ENCODE measurements at regions of chr17 and their contacts with region 1.

Region 1: GRCh38 chr17:42517516-42517915 is 18.5 kb upstream of the NAGLU start:
- DNase-seq: peak; percentile 73 to 85 (median 82)
- ATAC-seq: peak; percentile 64
- H3K4me3 ChIP-seq: no peak overlapping the region
- H3K27ac ChIP-seq: peak overlapping the region; percentile 41 to 80 (median 70)
- H3K4me1 ChIP-seq: peaks cover 40% of the 10 kb centered on the region
- H3K27me3 ChIP-seq: no peaks in the 10 kb centered on the region
- CTCF ChIP-seq: peak; percentile 76 to 89 (median 87)
- POLR2A ChIP-seq: no peak

Region 2: DNA sequence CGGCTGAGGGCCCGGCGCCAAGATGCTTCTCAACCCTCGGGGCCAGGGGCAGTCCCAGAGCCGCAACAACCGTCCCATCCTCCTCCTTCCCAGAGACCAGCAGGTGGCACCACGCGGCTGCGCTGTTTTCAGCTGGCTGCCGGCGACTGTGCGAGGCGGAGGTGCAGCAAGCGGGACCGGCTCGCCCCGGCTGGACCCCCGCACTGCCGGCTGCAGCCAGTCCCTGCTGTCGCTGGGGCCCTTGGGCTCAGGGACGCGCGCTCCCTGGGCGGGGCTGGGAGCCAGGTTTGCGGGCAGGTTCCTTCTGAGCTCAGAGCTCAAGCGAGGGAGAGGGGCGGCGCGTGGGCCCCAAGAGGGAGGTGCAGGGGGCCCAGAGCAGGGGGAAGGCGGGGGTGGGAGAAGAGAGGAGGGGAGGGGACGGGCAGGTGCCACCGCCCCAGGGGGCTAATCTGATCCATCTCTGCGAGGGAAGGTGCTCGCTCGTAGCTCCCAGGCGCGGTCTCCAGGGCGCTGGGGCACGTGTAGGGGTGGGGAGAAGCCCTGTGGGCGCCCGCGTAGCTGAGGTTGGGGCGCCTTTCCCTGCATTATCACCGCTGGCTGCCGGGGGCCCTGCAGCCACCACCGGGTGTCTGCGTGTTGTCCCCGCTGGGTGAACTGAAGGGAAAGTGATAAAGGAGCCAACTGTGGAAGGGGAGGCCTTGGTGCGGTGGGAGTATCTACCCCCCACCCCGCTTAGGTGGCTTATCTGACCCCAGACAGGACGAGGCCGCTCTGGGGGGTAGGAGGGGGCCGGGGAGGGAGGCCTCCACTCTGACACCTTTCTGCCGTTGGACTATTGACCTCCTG is 205.0 kb before region 1 on chr17:
- intact Hi-C with region 1: loop called (anchors 10 kb)
- DNase-seq: peak; percentile 64 to 83 (median 82)
- ATAC-seq: peak; percentile 65
- H3K4me3 ChIP-seq: no peak overlapping the region
- H3K27ac ChIP-seq: peak overlapping the region in 2 of 4 donors; percentile 44 to 71
- H3K4me1 ChIP-seq: peaks cover 23% of the 10 kb centered on the region
- H3K27me3 ChIP-seq: no peaks in the 10 kb centered on the region
- CTCF ChIP-seq: peak; percentile 20 to 62 (median 36)
- POLR2A ChIP-seq: no peak

Region 3: DNA sequence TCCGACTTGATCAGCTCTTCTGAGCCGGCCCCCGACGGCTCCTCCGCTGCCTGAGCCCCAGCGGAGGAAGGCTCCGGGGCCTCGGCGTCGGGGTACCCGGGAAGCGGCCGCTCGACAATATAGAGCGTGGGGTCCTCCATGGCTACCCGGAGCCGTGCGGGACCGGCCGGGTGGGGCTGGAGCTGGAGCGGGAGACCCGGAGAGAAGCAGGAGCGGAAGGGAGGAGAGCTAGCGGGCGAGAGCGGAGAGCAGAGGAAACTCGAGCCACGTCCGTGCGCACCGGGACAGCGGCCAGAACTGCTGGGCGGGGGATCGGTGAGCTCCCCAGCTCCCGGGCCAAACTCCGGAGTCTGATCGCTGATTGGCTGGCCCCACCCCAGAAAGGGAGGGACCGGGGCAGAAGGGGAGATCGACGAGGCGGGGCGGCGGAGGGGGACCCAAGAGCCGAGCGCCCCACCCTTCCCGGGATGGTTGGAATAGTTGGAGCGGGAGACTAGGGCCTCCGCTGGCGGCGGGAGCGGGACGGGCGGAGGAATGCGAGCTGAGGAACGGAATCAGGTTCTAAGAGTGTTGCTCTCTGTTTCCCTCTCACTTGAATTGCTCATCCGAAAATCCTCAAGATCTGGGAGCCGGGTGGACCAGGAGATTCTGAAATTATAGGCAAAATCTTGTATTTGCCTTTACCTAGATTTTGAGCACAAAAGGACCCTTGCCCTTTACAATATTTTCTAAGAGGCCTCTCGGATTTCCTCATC is 94.4 kb before region 1 on chr17 and contains the start of gene CAVIN1:
- intact Hi-C with region 1: no loop called
- DNase-seq: peak; percentile 87 to 94 (median 92)
- ATAC-seq: peak; percentile 89
- H3K4me3 ChIP-seq: peak within 1 kb of the TSS; percentile 14 to 42
- H3K27ac ChIP-seq: peak within 1 kb of the TSS; percentile 39 to 78 (median 68)
- H3K4me1 ChIP-seq: peaks cover 19% of the 10 kb centered on the region
- H3K27me3 ChIP-seq: peaks cover 0 to 4% of the 10 kb centered on the region in 2 donors
- CTCF ChIP-seq: peak in 1 of 7 experiments; percentile 6
- POLR2A ChIP-seq: peak; percentile 65 to 80 (median 80)
- total RNA-seq, gene CAVIN1: 63.3 to 75.8 TPM

Region 4: GRCh38 chr17:42577532-42578281 is 60.2 kb after region 1 on chr17 and contains the start of gene PSMC3IP:
- intact Hi-C with region 1: no loop called
- DNase-seq: peak; percentile 95 to 96 (median 95)
- ATAC-seq: peak; percentile 96
- H3K4me3 ChIP-seq: peak within 1 kb of the TSS; percentile 38 to 43
- H3K27ac ChIP-seq: peak within 1 kb of the TSS; percentile 63 to 92 (median 78)
- H3K4me1 ChIP-seq: peaks cover 22% of the 10 kb centered on the region
- H3K27me3 ChIP-seq: no peaks in the 10 kb centered on the region
- CTCF ChIP-seq: peak in 4 of 7 experiments; percentile 26 to 49 (median 42)
- POLR2A ChIP-seq: peak in 2 of 3 donors; percentile 76 to 79
- total RNA-seq, gene PSMC3IP: 2.1 TPM in 1 of 2 donors, not detected in the other

Region 5: DNA sequence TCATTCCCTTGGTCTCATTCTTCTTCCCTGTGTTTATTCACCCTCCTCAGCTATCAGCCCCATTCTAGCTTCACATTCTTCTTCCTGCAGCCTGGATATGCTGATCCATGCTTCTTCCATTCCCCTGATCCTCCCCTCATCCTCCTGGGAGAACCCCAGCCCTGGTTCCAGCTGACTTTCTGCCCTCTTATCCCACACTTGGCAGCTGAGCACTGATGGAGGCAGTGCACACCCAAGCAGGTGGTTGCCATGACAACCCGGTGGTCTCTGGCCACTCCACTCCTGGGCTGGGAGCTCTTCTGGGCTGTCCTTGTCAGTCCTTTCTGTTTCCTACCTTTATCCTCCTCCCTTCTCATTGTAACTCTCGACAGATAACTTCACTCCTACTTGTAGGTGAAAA is 124.8 kb after region 1 on chr17:
- intact Hi-C with region 1: no loop called
- DNase-seq: no peak
- ATAC-seq: no peak
- H3K4me3 ChIP-seq: no peak overlapping the region
- H3K27ac ChIP-seq: no peak overlapping the region
- H3K4me1 ChIP-seq: no peaks in the 10 kb centered on the region
- H3K27me3 ChIP-seq: no peaks in the 10 kb centered on the region
- CTCF ChIP-seq: no peak
- POLR2A ChIP-seq: no peak

Measured in body of pancreas (tissue), 4 donors.